ENCODE measurements at regions of chr2 and their contacts with region 1.

Region 1: GRCh38 chr2:134118279-134119116 is 135.4 kb upstream of the MGAT5 start:
- DNase-seq: peak; percentile 92
- H3K4me3 Mint-ChIP-seq: peak overlapping the region; percentile 96
- H3K27ac Mint-ChIP-seq: no peak overlapping the region
- H3K4me1 Mint-ChIP-seq: peaks cover 40% of the 10 kb centered on the region
- H3K27me3 Mint-ChIP-seq: peaks cover 21% of the 10 kb centered on the region

Region 2: DNA sequence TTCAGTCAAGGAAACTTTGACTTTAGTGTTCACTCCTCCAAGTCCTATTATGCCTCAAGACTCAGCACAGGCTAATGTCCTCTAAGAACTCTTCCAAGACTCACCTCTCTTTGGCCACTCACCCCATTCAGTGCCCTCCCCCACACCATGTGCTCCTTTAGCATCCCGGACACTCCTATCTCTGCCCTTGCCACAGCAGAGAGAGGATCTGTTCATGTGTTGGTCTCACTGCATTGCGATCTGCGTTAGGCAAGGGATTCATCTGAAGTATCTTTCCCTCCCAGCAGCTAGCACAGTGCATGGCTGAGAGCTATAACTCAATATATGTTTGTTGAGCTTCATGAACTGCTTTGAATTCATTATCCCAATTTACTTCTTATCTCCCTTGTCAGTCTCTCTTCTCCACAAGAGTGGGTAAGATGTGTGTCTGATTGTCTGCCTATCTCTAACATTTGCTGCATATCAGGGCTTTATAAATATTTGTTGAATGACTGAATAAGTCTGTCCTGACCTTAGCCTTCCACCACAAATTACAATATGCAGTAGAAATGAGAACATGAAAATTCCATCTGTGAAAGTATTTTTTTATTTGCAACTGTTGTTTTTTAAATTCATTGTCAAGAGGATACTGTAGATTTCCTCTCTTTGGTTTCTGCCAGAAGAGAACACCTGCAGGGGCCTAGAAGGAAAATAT is 370.3 kb before region 1 on chr2:
- CTCF ChIA-PET with region 1: no interaction called
- DNase-seq: no peak
- H3K4me3 Mint-ChIP-seq: no peak overlapping the region
- H3K27ac Mint-ChIP-seq: no peak overlapping the region
- H3K4me1 Mint-ChIP-seq: no peaks in the 10 kb centered on the region
- H3K27me3 Mint-ChIP-seq: no peaks in the 10 kb centered on the region

Region 3: GRCh38 chr2:134207564-134208209 is 89.2 kb after region 1 on chr2:
- CTCF ChIA-PET with region 1: interaction called, 79 read pairs
- DNase-seq: peak; percentile 75
- H3K4me3 Mint-ChIP-seq: no peak overlapping the region
- H3K27ac Mint-ChIP-seq: no peak overlapping the region
- H3K4me1 Mint-ChIP-seq: peaks cover 8% of the 10 kb centered on the region
- H3K27me3 Mint-ChIP-seq: no peaks in the 10 kb centered on the region

Region 4: GRCh38 chr2:134245340-134245984 is 127.0 kb after region 1 on chr2:
- CTCF ChIA-PET with region 1: interaction called, 52 read pairs
- DNase-seq: peak; percentile 86
- H3K4me3 Mint-ChIP-seq: no peak overlapping the region
- H3K27ac Mint-ChIP-seq: peak overlapping the region; percentile 33
- H3K4me1 Mint-ChIP-seq: peaks cover 65% of the 10 kb centered on the region
- H3K27me3 Mint-ChIP-seq: no peaks in the 10 kb centered on the region

Region 5: DNA sequence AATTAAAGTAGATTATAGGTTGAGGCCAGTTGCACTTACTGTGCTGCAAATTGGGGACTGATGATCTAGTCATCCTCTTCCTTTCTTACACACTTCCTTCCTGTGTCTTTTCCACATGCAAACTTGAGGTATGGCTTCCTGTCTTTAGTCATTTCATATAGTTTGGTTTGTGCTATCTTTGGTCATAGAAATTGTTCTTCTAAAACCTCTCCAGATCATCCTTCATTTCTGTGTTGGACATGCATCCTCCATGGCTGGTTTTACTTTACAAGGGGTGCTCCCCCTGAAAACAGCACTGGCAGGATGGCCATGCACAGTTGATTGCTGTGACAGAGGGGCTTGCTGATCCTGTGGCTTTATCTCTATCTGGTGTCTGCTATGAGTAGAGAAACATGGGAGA is 171.9 kb after region 1 on chr2:
- CTCF ChIA-PET with region 1: interaction called, 14 read pairs
- DNase-seq: peak; percentile 25
- H3K4me3 Mint-ChIP-seq: no peak overlapping the region
- H3K27ac Mint-ChIP-seq: no peak overlapping the region
- H3K4me1 Mint-ChIP-seq: peaks cover 37% of the 10 kb centered on the region
- H3K27me3 Mint-ChIP-seq: no peaks in the 10 kb centered on the region

Region 6: DNA sequence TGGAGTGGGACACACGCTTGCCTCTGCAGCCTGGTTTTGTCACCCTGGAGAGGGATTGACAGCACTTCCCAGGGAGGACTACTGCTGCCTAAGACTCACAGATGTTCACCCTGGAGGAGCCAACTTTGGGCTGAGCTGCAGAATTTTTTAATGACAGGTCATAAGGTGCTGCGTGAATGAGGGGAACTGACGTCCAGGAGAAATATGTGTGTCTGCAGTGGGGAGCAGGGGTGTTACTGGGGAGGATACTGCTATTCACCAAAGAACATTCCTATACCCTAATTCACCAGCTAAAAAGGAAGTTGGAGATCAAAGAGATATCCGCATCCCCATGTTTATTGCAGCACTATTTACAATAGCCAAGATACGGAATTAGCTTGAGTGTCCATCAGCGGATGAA is 279.8 kb after region 1 on chr2:
- CTCF ChIA-PET with region 1: interaction called, 10 read pairs
- DNase-seq: no peak
- H3K4me3 Mint-ChIP-seq: no peak overlapping the region
- H3K27ac Mint-ChIP-seq: no peak overlapping the region
- H3K4me1 Mint-ChIP-seq: no peaks in the 10 kb centered on the region
- H3K27me3 Mint-ChIP-seq: no peaks in the 10 kb centered on the region

Region 7: DNA sequence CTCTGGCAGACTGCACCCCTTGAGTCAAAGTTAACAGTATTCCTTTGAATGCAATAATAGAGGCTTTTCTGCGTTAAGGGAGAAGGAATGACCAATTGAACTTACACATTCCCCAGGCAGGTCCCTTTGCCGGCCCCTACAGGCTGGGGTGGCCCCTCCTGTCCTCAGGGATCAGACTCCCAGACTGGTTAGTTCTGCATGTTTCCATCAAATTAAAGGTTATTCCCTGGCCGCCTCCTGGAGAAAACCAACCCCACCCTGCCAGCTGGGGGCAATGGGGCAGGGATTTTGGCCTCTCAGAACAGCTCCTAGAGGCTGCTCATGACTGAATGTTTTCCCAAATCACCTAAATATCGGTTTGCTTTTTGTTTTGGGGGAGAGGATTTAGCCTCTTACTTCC is 335.0 kb after region 1 on chr2:
- CTCF ChIA-PET with region 1: interaction called, 44 read pairs
- DNase-seq: no peak
- H3K4me3 Mint-ChIP-seq: no peak overlapping the region
- H3K27ac Mint-ChIP-seq: no peak overlapping the region
- H3K4me1 Mint-ChIP-seq: no peaks in the 10 kb centered on the region
- H3K27me3 Mint-ChIP-seq: no peaks in the 10 kb centered on the region